Right cardiac atrium (tissue), 5 donors: ENCODE measurements at regions of chr19 and their contacts with region 1.

Region 1: GRCh38 chr19:45451131-45451849 is 16.5 kb upstream of the FOSB start:
- DNase-seq: peak in 1 of 3 donors; percentile 70
- ATAC-seq: peak; percentile 7 to 19
- H3K4me3 ChIP-seq: peak overlapping the region; percentile 67
- H3K27ac ChIP-seq: peak overlapping the region; percentile 38
- H3K4me1 ChIP-seq: no peaks in the 10 kb centered on the region
- H3K27me3 ChIP-seq: no peaks in the 10 kb centered on the region

Region 2: DNA sequence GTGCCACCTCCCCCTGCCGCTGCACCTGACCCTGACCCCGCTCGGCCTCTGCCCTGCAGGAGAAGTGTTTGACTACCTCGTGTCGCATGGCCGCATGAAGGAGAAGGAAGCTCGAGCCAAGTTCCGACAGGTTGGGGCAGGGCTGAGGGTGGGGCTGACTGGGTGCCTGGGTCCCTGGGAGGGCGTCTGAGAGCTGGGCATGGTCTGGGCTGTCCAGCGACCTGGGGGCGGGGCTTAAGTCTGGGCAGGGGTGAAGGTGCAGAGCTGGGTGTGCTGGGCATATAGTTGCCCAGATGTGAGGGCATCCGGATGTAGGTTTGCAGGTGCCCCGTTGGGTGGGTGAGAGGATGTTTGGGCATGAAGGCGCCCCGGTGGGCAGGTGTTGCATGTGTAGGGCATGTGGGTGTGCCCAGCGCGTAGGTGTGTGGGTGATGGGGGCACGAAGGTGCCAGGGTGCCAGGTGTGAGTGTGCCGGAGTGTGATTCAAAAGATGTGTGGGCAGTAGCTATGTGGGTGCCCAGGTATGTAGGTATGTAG is 186.4 kb before region 1 on chr19:
- intact Hi-C with region 1: no loop called
- DNase-seq: no peak
- ATAC-seq: peak; percentile 10 to 12
- H3K4me3 ChIP-seq: no peak overlapping the region
- H3K27ac ChIP-seq: no peak overlapping the region
- H3K4me1 ChIP-seq: no peaks in the 10 kb centered on the region
- H3K27me3 ChIP-seq: no peaks in the 10 kb centered on the region

Region 3: DNA sequence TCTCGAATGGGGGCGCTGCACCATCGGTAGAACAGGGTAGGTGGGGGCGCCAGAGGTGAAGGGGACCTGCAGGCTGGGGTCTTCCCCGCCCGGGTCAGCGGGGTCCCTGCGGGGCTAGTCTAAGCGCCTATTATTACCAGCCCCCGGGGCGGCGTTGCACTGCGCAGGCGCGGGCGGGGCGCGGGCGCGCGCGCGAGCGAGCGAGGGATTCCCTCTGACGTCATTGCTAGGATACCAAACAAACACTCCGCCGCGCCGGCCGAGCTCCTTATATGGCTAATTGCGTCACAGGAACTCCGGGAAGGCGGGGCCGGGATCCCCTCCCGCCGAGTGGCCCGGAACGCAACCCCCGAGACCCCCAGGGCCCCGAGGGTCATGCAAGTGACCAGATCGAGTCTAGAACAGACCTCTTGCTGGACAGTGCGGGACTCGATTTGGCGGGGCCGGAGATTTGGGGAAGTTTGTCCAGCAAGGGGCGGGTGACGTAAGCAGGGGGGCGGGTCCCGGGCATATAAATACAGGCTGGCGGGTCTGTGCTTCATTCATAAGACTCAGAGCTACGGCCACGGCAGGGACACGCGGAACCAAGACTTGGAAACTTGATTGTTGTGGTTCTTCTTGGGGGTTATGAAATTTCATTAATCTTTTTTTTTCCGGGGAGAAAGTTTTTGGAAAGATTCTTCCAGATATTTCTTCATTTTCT is 16.3 kb after region 1 on chr19 and contains the start of gene FOSB:
- intact Hi-C with region 1: loop called in 1 of 4 experiments (anchors 2 kb)
- DNase-seq: peak; percentile 95 to 98 (median 97)
- ATAC-seq: peak; percentile 61 to 69
- H3K4me3 ChIP-seq: peak within 1 kb of the TSS; percentile 45
- H3K27ac ChIP-seq: peak within 1 kb of the TSS; percentile 85
- H3K4me1 ChIP-seq: no peaks in the 10 kb centered on the region
- H3K27me3 ChIP-seq: no peaks in the 10 kb centered on the region
- total RNA-seq, gene FOSB: 1.6 to 16.3 (median 6.1) TPM